ENCODE measurements at regions of chr6 and their contacts with region 1.

Region 1: GRCh38 chr6:21022343-21023107 is 488.3 kb downstream of the CDKAL1 start:
- DNase-seq: peak; percentile 92
- H3K4me3 ChIP-seq: no peak overlapping the region
- H3K27ac ChIP-seq: peak overlapping the region; percentile 75
- H3K4me1 ChIP-seq: peaks cover 39% of the 10 kb centered on the region
- H3K27me3 ChIP-seq: no peaks in the 10 kb centered on the region
- CTCF ChIP-seq: no peak
- POLR2A ChIP-seq: no peak

Region 2: GRCh38 chr6:20098267-20098876 is 924.2 kb before region 1 on chr6:
- CTCF ChIA-PET with region 1: no interaction called
- POLR2A ChIA-PET with region 1: no interaction called
- dilution Hi-C with region 1: no loop called
- intact Hi-C with region 1: no loop called
- DNase-seq: no peak
- H3K4me3 ChIP-seq: no peak overlapping the region
- H3K27ac ChIP-seq: no peak overlapping the region
- H3K4me1 ChIP-seq: no peaks in the 10 kb centered on the region
- H3K27me3 ChIP-seq: no peaks in the 10 kb centered on the region
- CTCF ChIP-seq: no peak
- POLR2A ChIP-seq: no peak

Region 3: GRCh38 chr6:20952699-20953474 is 69.6 kb before region 1 on chr6:
- CTCF ChIA-PET with region 1: no interaction called
- POLR2A ChIA-PET with region 1: no interaction called
- dilution Hi-C with region 1: no loop called
- intact Hi-C with region 1: loop called (anchors 2 kb)
- DNase-seq: peak; percentile 95
- H3K4me3 ChIP-seq: peak overlapping the region in 1 of 3 experiments; percentile 55
- H3K27ac ChIP-seq: peak overlapping the region; percentile 94
- H3K4me1 ChIP-seq: peaks cover 14% of the 10 kb centered on the region
- H3K27me3 ChIP-seq: no peaks in the 10 kb centered on the region
- CTCF ChIP-seq: peak; percentile 26 to 50
- POLR2A ChIP-seq: no peak

Region 4: DNA sequence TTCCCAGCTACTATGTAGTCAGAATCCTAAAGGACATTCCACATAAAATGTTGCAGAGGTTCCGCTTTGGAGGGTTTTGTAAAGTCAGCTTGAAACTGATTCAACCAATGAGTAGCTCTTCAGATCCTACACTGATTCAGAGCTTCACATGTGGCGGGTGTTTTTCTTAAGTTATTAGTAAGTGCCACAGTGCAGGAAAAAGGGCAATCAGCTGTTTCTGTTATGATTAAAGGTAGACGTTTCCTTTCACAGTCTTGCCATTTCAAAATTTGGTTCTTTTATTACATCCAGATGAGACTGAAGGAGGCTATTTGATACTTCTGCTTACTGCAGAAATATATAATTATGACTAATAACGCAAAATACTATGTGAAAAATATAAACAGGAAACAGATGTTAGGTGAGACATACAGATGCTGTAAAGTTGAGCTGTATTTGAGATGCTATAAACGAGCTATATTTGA is 44.3 kb before region 1 on chr6:
- CTCF ChIA-PET with region 1: interaction called, 3 read pairs
- POLR2A ChIA-PET with region 1: no interaction called
- dilution Hi-C with region 1: no loop called
- intact Hi-C with region 1: loop called (anchors 1 kb)
- DNase-seq: peak; percentile 93
- H3K4me3 ChIP-seq: no peak overlapping the region
- H3K27ac ChIP-seq: peak overlapping the region; percentile 40
- H3K4me1 ChIP-seq: peaks cover 18% of the 10 kb centered on the region
- H3K27me3 ChIP-seq: no peaks in the 10 kb centered on the region
- CTCF ChIP-seq: no peak
- POLR2A ChIP-seq: no peak

Region 5: GRCh38 chr6:21064756-21065340 is 42.3 kb after region 1 on chr6:
- CTCF ChIA-PET with region 1: interaction called, 3 read pairs
- POLR2A ChIA-PET with region 1: no interaction called
- dilution Hi-C with region 1: no loop called
- intact Hi-C with region 1: loop called (anchors 5 kb)
- DNase-seq: peak; percentile 66
- H3K4me3 ChIP-seq: no peak overlapping the region
- H3K27ac ChIP-seq: no peak overlapping the region
- H3K4me1 ChIP-seq: peaks cover 21% of the 10 kb centered on the region
- H3K27me3 ChIP-seq: no peaks in the 10 kb centered on the region
- CTCF ChIP-seq: no peak
- POLR2A ChIP-seq: no peak

Region 6: DNA sequence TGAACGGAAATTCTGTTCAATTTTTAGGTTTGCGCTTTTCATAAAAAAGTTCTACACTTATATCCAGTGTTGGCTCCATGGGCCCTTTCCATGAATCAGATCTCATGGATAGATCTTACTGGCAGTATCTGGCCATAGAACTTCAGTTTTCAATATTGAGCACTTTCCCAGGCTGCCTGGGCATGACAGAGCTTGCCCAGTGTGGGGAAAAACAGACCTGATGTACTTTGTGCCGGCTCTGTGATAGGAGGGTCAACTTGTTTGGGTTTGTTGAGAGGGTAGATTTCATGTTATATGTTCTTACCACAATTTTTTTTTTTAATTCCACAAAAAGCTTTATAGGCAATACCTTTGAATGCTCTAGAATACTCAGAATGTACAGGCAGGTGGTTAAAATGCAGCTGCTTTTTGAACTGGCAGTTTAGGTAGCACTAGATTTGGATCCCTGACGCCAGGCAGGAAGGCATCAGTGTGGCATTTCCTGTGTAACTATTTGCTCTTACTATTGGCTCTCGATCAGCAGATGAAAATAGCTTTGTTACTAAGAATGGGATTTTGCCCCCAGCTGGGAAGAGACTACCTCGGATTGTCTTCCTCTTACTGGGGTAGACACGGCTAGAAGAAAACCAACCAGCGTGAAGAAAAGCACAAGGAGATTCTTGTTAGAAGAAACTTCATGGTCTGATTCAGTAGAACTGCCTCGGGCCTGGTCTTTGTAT is 166.1 kb after region 1 on chr6:
- CTCF ChIA-PET with region 1: no interaction called
- POLR2A ChIA-PET with region 1: no interaction called
- dilution Hi-C with region 1: no loop called
- intact Hi-C with region 1: loop called (anchors 1 kb)
- DNase-seq: peak; percentile 64
- H3K4me3 ChIP-seq: no peak overlapping the region
- H3K27ac ChIP-seq: peak overlapping the region; percentile 71
- H3K4me1 ChIP-seq: peaks cover 35% of the 10 kb centered on the region
- H3K27me3 ChIP-seq: no peaks in the 10 kb centered on the region
- CTCF ChIP-seq: no peak
- POLR2A ChIP-seq: no peak

Region 7: DNA sequence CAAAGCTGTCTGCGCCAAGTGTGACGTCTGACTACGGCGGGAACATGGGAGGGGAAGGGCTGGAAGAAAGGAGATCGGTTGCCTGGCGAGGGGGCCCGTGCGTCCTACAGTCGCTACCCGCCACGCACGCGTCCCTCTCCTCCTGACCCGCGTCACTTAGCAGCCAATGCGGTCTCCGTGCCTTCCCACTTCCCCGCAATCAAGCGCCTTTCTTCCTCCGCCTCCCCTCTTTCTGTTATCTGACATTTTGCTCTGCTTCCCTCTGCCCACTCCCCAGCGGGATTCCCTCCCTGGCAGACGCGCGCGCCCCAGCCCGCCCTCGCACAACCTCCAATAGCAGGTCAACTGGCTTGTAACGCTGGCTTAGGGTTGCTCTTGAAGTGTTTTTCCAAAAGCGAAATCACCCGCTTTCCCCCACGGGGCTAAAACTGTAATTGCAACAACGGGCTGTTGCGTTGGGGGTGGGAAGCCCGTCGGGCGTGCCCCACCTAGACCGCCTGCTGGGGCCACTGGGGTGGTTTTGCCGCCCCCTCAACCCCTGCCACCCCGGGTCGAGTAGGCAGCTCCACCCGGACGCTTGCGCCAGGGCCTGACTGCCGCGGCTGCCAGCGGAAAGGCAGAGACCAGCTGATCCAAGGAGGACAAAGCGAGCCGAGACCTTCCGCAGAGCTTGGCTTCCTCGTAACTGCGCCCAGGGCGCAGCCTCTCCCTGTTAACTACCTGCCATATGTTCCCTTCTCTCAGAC is 564.8 kb after region 1 on chr6:
- CTCF ChIA-PET with region 1: interaction called, 8 read pairs
- POLR2A ChIA-PET with region 1: interaction called, 12 read pairs
- dilution Hi-C with region 1: no loop called
- intact Hi-C with region 1: loop called (anchors 1 kb)
- DNase-seq: peak; percentile 78
- H3K4me3 ChIP-seq: peak overlapping the region; percentile 33 to 65 (median 46)
- H3K27ac ChIP-seq: peak overlapping the region; percentile 71
- H3K4me1 ChIP-seq: peaks cover 17% of the 10 kb centered on the region
- H3K27me3 ChIP-seq: no peaks in the 10 kb centered on the region
- CTCF ChIP-seq: peak in 1 of 2 donors; percentile 50
- POLR2A ChIP-seq: no peak

Measured in endothelial cell of umbilical vein (primary cell).